ENCODE measurements at regions of chr3 and their contacts with region 1.

Region 1: DNA sequence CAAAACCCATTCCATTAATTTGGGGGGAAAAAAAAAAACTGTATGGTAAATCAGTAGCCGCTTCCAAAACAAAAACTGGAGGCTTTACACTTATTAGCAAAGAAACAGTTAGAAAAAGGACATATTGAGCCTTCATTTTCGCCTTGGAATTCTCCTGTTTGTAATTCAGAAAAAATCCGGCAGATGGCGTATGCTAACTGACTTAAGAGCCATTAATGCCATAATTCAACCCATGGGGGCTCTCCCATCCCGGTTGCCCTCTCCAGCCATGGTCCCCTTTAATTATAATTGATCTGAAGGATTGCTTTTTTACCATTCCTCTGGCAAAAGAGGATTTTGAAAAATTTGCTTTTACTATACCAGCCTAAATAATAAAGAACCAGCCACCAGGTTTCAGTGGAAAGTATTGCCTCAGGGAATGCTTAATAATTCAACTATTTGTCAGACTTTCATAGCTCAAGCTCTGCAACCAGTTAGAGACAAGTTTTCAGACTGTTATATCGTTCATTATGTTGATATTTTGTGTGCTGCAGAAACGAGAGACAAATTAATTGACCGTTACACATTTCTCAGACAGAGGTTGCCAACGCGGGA is 9.4 kb upstream of the RPL24 start:
- DNase-seq: peak; percentile 81
- H3K4me3 ChIP-seq: no peak overlapping the region
- H3K27ac ChIP-seq: no peak overlapping the region
- H3K4me1 ChIP-seq: peaks cover 19% of the 10 kb centered on the region
- CTCF ChIP-seq: peak; percentile 87

Region 2: GRCh38 chr3:101235048-101235447 is 460.8 kb before region 1 on chr3:
- CTCF ChIA-PET with region 1: no interaction called
- POLR2A ChIA-PET with region 1: no interaction called
- intact Hi-C with region 1: no loop called
- DNase-seq: no peak
- H3K4me3 ChIP-seq: no peak overlapping the region
- H3K27ac ChIP-seq: no peak overlapping the region
- H3K4me1 ChIP-seq: no peaks in the 10 kb centered on the region
- CTCF ChIP-seq: no peak

Region 3: DNA sequence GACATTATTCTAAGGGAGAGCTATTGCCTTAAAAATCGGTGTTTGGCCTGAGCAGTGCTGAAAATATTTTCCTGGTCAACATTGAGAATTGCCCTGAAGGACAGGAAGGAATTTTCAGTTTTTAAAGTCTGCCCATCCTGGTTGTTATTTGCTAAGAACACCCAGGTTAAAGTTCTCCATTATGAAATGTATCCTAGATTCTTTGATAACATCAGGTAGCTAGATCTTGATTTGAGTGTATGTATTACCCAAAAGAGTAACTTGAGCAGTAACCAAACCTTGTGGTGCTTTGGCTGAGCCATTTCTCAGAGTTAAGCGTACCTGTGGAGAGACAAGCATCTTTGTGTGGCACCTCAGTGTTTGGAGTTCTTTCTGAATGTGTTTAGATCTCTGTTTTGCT is 48.9 kb after region 1 on chr3:
- CTCF ChIA-PET with region 1: no interaction called
- POLR2A ChIA-PET with region 1: no interaction called
- intact Hi-C with region 1: no loop called
- DNase-seq: no peak
- H3K4me3 ChIP-seq: no peak overlapping the region
- H3K27ac ChIP-seq: peak overlapping the region; percentile 9
- H3K4me1 ChIP-seq: no peaks in the 10 kb centered on the region
- CTCF ChIP-seq: no peak

Region 4: DNA sequence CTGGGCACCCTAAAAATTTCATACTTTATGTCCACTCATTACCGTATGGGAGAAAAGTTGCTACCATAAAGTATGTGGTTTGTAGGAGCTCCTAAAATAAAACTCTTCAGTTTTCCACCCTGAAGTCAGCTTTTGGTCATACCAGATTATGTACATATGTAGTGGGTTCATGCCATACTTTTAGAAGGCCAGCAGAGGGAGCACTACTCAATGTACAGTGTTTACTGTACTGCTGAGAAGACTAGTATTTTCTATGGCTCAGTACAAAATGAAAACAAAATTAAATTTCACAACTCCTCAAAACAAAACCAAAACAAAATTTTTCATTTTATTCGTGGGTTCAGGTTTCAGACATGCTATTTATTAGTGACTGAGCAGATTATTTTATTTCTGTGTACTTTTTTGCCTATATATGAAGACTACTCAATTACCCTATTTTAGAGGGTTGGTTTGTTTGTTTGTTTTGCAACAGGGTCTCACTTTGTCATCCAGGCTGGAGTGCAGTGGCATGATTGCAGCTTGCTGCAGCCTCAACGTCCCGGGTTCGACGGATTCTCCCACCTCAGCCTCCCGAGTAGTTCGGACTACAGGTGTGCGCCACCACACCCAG is 107.4 kb after region 1 on chr3:
- CTCF ChIA-PET with region 1: interaction called, 3 read pairs
- POLR2A ChIA-PET with region 1: interaction called, 3 read pairs
- intact Hi-C with region 1: loop called (anchors 1 kb)
- DNase-seq: peak; percentile 89
- H3K4me3 ChIP-seq: no peak overlapping the region
- H3K27ac ChIP-seq: no peak overlapping the region
- H3K4me1 ChIP-seq: peaks cover 5% of the 10 kb centered on the region
- CTCF ChIP-seq: peak; percentile 99

Region 5: GRCh38 chr3:101995371-101996046 is 299.6 kb after region 1 on chr3:
- CTCF ChIA-PET with region 1: no interaction called
- POLR2A ChIA-PET with region 1: no interaction called
- intact Hi-C with region 1: loop called (anchors 5 kb)
- DNase-seq: no peak
- H3K4me3 ChIP-seq: no peak overlapping the region
- H3K27ac ChIP-seq: no peak overlapping the region
- H3K4me1 ChIP-seq: peaks cover 25% of the 10 kb centered on the region
- CTCF ChIP-seq: no peak